Spleen (tissue), 13 donors: ENCODE measurements at regions of chr15 and their contacts with region 1.

Region 1: DNA sequence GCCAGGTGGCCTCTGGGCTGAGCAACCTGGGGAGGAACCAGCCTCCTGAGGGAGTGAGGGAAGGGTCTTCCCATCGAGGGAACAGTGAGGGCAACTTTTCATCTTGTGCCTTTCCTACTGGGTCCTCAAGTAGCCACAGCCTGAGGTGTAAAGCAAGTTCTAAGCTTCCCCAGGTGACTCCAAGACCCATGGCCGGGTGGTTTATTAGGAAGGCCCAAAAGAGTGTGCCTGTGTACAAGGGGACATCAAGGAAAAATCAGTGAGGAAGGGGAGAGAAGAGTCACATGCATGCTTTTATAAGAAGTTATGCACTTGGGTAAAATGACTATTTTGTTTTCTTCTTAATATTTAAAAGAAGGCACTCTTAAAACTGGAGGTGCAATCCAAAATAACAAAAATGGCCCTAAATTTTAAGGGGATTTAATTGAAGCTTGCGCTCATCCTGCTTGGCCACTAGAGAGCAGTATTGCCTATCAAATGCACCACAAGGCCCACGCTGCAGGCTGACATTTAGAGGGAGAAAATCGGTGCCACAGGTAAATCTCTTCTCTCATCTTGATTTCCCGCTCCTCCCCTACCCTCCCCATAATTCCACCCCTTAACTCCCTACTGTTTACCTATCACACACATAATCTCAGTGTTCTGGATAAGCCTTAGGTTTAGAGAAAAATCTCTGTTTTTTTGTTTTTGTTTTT is 6.7 kb downstream of the NANOGP8 start:
- DNase-seq: no peak
- H3K4me3 ChIP-seq: no peak overlapping the region
- H3K27ac ChIP-seq: no peak overlapping the region
- H3K4me1 ChIP-seq: no peaks in the 10 kb centered on the region
- H3K27me3 ChIP-seq: no peaks in the 10 kb centered on the region
- CTCF ChIP-seq: peak in 10 of 11 experiments; percentile 41 to 81 (median 74)
- POLR2A ChIP-seq: no peak

Region 2: GRCh38 chr15:35150361-35150760 is 72.0 kb after region 1 on chr15:
- intact Hi-C with region 1: no loop called
- DNase-seq: no peak
- H3K4me3 ChIP-seq: no peak overlapping the region
- H3K27ac ChIP-seq: no peak overlapping the region
- H3K4me1 ChIP-seq: no peaks in the 10 kb centered on the region
- H3K27me3 ChIP-seq: no peaks in the 10 kb centered on the region
- CTCF ChIP-seq: no peak
- POLR2A ChIP-seq: no peak

Region 3: GRCh38 chr15:35293353-35294130 is 215.2 kb after region 1 on chr15:
- intact Hi-C with region 1: no loop called
- DNase-seq: no peak
- H3K4me3 ChIP-seq: no peak overlapping the region
- H3K27ac ChIP-seq: no peak overlapping the region
- H3K4me1 ChIP-seq: no peaks in the 10 kb centered on the region
- H3K27me3 ChIP-seq: no peaks in the 10 kb centered on the region
- CTCF ChIP-seq: no peak
- POLR2A ChIP-seq: no peak

Region 4: GRCh38 chr15:35450492-35450891 is 372.1 kb after region 1 on chr15:
- intact Hi-C with region 1: loop called (anchors 10 kb)
- DNase-seq: no peak
- H3K4me3 ChIP-seq: no peak overlapping the region
- H3K27ac ChIP-seq: no peak overlapping the region
- H3K4me1 ChIP-seq: no peaks in the 10 kb centered on the region
- H3K27me3 ChIP-seq: no peaks in the 10 kb centered on the region
- CTCF ChIP-seq: no peak
- POLR2A ChIP-seq: no peak